GM18951 (cell line): ENCODE measurements at regions of chr4 and their contacts with region 1.

Region 1: GRCh38 chr4:165364452-165365080 is 14.2 kb upstream of the CPE start:
- POLR2A ChIP-seq: no peak

Region 2: DNA sequence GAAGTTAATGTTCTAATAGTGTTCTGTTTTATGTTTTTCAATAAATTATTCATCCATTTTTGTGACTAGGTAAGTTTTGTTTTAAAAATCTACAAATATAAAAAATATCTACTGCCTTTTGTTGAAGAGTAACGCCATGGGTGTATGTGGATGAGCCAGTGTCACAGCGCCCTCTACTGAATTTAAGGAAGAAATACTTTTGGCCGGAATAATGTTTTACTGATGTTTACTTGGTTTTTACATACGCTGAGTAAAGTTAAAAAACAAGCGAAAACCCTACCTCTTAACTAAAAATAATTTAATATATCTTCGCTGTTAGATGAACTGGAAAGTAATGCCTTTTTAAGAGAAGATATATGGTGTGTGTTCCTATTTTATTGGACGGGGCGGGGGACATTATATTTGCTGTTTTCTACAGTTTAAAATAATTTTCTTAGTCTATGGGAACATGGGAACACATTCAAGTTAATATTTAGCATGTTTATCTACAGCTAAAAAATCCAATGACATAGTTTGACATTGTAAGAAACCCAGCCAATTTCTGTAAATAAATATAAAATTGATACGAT is 100.3 kb after region 1 on chr4:
- in situ Hi-C with region 1: loop called (anchors 5 kb)
- POLR2A ChIP-seq: no peak